ENCODE measurements at regions of chr10 and their contacts with region 1.

Region 1: DNA sequence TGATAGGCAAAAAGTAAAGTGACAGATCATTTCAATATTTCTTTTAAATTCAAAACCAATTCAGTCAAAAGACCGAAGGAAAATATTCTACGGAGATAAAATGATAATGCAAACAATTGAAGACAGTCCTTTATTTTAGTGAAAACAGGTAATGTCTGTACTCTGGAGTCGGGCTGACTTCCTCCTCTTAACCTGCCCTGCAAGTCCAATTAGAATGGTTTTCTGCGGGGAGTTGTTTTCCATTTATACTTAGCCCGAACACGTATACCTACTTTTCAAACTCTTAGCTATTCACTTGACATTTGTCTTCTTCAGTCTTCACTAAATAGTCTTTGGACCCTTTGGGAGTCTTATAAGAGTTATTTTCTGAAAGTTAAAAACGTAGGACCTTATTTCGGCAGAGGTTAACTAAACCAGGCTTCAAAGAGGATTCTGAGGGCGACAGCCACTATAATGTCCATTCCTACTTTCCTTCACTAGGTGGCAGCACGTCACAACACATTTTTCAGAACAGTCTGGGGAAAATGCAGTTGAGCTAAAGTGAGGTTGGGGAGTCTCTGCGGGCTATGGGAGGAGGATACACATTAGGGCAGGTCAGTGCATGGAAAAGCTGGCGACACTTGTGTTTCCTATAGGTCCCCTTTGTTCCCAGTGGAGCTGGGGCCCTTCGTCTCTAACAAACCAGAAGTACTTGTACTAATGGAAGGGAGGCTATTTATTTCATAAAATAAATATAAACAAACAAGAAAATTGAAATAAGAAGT is 472.0 kb downstream of the KCNMA1 start:
- DNase-seq: no peak
- ATAC-seq: peak; percentile 54 to 77 (median 64)
- H3K4me3 ChIP-seq: peak overlapping the region; percentile 33
- H3K27ac ChIP-seq: no peak overlapping the region
- H3K4me1 ChIP-seq: peaks cover 10% of the 10 kb centered on the region
- H3K27me3 ChIP-seq: no peaks in the 10 kb centered on the region
- CTCF ChIP-seq: peak; percentile 77

Region 2: GRCh38 chr10:77649333-77650331 is 484.0 kb after region 1 on chr10:
- intact Hi-C with region 1: loop called in 1 of 2 experiments (anchors 5 kb)
- DNase-seq: no peak
- ATAC-seq: no peak
- H3K4me3 ChIP-seq: no peak overlapping the region
- H3K27ac ChIP-seq: no peak overlapping the region
- H3K4me1 ChIP-seq: no peaks in the 10 kb centered on the region
- H3K27me3 ChIP-seq: peaks cover 0 to 5% (median 0%) of the 10 kb centered on the region in 3 donors
- CTCF ChIP-seq: no peak